ENCODE measurements at regions of chr2 and their contacts with region 1.

Region 1: DNA sequence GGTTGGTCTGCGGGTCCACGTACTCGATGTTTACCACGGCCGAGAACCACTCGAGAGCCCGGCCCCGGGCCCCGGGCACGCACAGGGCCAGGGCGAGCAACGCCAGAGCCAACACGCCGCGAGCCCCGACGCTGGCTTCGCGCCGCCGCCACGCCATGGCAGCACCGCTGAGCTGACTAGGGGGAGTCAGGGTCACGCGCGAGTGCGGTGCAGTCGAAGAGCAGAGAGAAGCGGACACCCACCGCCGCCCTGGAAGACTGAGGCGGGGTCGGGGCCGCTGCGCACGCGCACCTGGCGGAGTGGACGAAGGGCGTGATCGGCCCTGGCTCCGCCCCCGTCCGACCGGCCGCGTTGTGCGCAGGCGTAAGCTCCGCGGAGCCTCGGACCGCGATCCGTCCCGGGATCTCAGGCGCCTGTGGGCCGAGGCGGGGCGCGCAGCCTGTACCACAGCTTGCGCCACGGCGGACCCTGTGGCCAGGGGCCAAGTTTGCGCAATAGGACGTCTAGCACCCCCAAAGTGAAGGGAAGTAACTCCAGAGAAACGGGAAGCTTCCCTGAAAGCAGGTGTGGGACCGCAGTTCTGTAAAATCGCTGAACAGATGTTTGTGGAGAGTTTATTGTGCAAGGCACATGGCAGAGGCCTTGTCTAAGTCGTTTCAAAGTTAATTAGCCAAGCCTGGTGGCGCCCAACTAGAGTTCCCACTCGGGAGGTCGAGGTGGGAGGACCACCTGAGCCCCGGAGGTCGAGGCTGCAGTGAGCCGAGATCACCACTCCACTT is at the start of gene RNF149:
- DNase-seq: peak; percentile 52
- H3K4me3 ChIP-seq: peak within 1 kb of the TSS; percentile 73 to 94 (median 82)
- H3K27ac ChIP-seq: peak within 1 kb of the TSS; percentile 93 to 99 (median 96)
- H3K4me1 ChIP-seq: peaks cover 30 to 69% (median 45%) of the 10 kb centered on the region in 3 donors
- H3K27me3 ChIP-seq: no peaks in the 10 kb centered on the region
- CTCF ChIP-seq: peak in 4 of 6 experiments; percentile 30 to 36 (median 34)
- POLR2A ChIP-seq: peak in 3 of 4 donors; percentile 91 to 100 (median 95)
- total RNA-seq, gene RNF149: 80.3 to 117 (median 110) TPM

Region 2: GRCh38 chr2:101252408-101253012 is 56.1 kb before region 1 on chr2 and contains the start of gene CNOT11:
- intact Hi-C with region 1: loop called (anchors 10 kb)
- DNase-seq: peak; percentile 92
- H3K4me3 ChIP-seq: peak within 1 kb of the TSS; percentile 91 to 99 (median 98)
- H3K27ac ChIP-seq: peak within 1 kb of the TSS; percentile 93 to 99 (median 98)
- H3K4me1 ChIP-seq: peaks cover 20 to 54% (median 37%) of the 10 kb centered on the region in 3 donors
- H3K27me3 ChIP-seq: no peaks in the 10 kb centered on the region
- CTCF ChIP-seq: peak in 1 of 6 experiments; percentile 23
- POLR2A ChIP-seq: peak in 3 of 4 donors; percentile 79 to 92 (median 82)
- total RNA-seq, gene CNOT11: 28.0 to 53.2 (median 41.8) TPM

Region 3: GRCh38 chr2:101396316-101396717 is 87.7 kb after region 1 on chr2:
- intact Hi-C with region 1: no loop called
- DNase-seq: no peak
- H3K4me3 ChIP-seq: no peak overlapping the region
- H3K27ac ChIP-seq: peak overlapping the region in 3 of 4 donors; percentile 55 to 69 (median 61)
- H3K4me1 ChIP-seq: peaks cover 0 to 42% (median 3%) of the 10 kb centered on the region in 3 donors
- H3K27me3 ChIP-seq: peaks cover 0 to 6% (median 0%) of the 10 kb centered on the region in 4 donors
- CTCF ChIP-seq: no peak
- POLR2A ChIP-seq: no peak

Measured in esophagus squamous epithelium (tissue), 5 donors.